GM12878 (cell line): ENCODE measurements at regions of chr16 and their contacts with region 1.

Region 1: GRCh38 chr16:21158208-21159110 is at the start of gene LDAF1:
- DNase-seq: no peak
- ATAC-seq: peak; percentile 97
- H3K4me3 ChIP-seq: peak within 1 kb of the TSS; percentile 84
- H3K27ac ChIP-seq: peak within 1 kb of the TSS; percentile 42
- H3K4me1 ChIP-seq: peaks cover 9% of the 10 kb centered on the region
- H3K27me3 ChIP-seq: no peaks in the 10 kb centered on the region
- CTCF ChIP-seq: no peak
- EP300 ChIP-seq: no peak
- POLR2A ChIP-seq: peak; percentile 49; the same call in 1 of the 2 replicates
- RAD21 ChIP-seq: no peak
- polyA plus RNA-seq, gene LDAF1: 6.8 to 8.3 TPM

Region 2: GRCh38 chr16:21179126-21179982 is 20.9 kb after region 1 on chr16:
- CTCF ChIA-PET with region 1: interaction called, 5 read pairs
- POLR2A ChIA-PET with region 1: no interaction called
- RAD21 ChIA-PET with region 1: no interaction called
- SMC1A ChIA-PET with region 1: interaction called, 24 read pairs
- in situ Hi-C with region 1: no loop called
- intact Hi-C with region 1: no loop called
- DNase-seq: no peak
- ATAC-seq: no peak
- H3K4me3 ChIP-seq: no peak overlapping the region
- H3K27ac ChIP-seq: no peak overlapping the region
- H3K4me1 ChIP-seq: no peaks in the 10 kb centered on the region
- H3K27me3 ChIP-seq: no peaks in the 10 kb centered on the region
- CTCF ChIP-seq: no peak
- EP300 ChIP-seq: no peak
- POLR2A ChIP-seq: no peak
- RAD21 ChIP-seq: no peak

Region 3: DNA sequence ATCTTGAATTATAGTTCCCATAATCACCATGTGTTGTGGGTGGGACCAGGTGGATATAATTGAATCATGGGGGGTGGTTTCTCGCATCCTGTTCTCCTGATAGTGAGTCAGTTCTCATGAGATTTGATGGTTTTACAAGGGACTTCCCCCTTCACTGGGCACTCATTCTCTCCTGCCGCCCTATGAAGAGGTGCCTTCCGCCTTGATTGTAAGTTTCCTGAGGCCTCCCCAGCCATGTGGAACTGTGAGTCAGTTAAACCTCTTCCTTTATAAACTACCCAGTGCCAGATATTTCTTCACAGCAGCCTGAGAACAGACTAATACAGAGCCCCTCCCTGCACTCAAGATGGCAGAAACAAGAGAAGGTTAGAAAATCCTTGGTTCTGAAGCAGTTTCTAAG is 26.4 kb after region 1 on chr16:
- CTCF ChIA-PET with region 1: interaction called, 28 read pairs
- POLR2A ChIA-PET with region 1: interaction called, 3 read pairs
- RAD21 ChIA-PET with region 1: interaction called, 6 read pairs
- SMC1A ChIA-PET with region 1: interaction called, 30 read pairs
- in situ Hi-C with region 1: no loop called
- intact Hi-C with region 1: no loop called
- DNase-seq: no peak
- ATAC-seq: no peak
- H3K4me3 ChIP-seq: no peak overlapping the region
- H3K27ac ChIP-seq: no peak overlapping the region
- H3K4me1 ChIP-seq: peaks cover 6% of the 10 kb centered on the region
- H3K27me3 ChIP-seq: no peaks in the 10 kb centered on the region
- CTCF ChIP-seq: no peak
- EP300 ChIP-seq: no peak
- POLR2A ChIP-seq: no peak
- RAD21 ChIP-seq: no peak

Region 4: DNA sequence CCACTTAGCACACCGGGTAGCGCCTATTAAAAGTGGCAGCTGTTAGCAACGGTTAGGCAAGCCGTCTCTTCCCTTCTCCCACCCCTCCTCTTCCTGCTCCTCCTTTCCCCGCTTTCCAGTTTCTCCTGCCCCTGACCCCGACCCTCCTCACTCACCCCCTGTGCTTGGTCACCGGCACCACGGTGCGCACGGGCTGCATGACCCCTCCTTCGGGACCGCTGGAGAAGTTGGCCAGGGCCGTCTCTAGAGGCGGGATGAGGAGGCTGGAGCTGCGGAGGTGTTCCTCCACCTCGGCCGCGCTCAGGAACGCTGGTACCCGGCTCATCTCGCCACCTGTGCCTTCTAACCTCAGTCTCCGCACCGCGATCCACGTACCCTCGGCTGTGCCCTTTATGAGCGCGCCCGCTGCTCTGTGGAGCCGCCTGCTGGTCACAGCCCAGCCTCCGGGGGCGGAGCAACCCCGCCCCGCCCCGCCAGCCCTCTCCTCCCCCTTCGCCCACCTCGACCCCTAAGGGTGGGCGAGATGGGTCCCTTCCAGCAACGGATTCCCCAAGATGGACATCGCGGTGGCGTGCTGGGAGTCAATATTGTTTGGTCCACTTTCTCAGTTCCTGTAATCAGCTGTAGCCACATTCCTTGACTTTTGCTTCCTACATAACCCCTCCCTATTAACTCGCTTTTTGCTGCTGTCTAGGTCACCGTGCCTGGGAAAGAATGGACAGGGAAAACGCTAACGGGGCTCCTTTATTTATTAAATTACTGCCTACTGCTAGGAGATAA is 119.7 kb after region 1 on chr16 and contains the start of gene CRYM:
- CTCF ChIA-PET with region 1: interaction called, 15 read pairs
- POLR2A ChIA-PET with region 1: no interaction called
- RAD21 ChIA-PET with region 1: interaction called, 5 read pairs
- SMC1A ChIA-PET with region 1: interaction called, 3 read pairs
- in situ Hi-C with region 1: no loop called
- intact Hi-C with region 1: no loop called
- DNase-seq: no peak
- ATAC-seq: peak; percentile 88
- H3K4me3 ChIP-seq: peak within 1 kb of the TSS; percentile 50; the same call in 1 of the 2 replicates
- H3K27ac ChIP-seq: no peak within 1 kb of the TSS
- H3K4me1 ChIP-seq: peaks cover 25% of the 10 kb centered on the region
- H3K27me3 ChIP-seq: no peaks in the 10 kb centered on the region; a peak in 1 of 4 replicates
- CTCF ChIP-seq: peak; percentile 69 to 96 (median 70)
- EP300 ChIP-seq: no peak
- POLR2A ChIP-seq: no peak
- RAD21 ChIP-seq: peak; percentile 23; the same call in 1 of the 2 replicates
- polyA plus RNA-seq, gene CRYM: 2.3 to 3.0 TPM

Region 5: DNA sequence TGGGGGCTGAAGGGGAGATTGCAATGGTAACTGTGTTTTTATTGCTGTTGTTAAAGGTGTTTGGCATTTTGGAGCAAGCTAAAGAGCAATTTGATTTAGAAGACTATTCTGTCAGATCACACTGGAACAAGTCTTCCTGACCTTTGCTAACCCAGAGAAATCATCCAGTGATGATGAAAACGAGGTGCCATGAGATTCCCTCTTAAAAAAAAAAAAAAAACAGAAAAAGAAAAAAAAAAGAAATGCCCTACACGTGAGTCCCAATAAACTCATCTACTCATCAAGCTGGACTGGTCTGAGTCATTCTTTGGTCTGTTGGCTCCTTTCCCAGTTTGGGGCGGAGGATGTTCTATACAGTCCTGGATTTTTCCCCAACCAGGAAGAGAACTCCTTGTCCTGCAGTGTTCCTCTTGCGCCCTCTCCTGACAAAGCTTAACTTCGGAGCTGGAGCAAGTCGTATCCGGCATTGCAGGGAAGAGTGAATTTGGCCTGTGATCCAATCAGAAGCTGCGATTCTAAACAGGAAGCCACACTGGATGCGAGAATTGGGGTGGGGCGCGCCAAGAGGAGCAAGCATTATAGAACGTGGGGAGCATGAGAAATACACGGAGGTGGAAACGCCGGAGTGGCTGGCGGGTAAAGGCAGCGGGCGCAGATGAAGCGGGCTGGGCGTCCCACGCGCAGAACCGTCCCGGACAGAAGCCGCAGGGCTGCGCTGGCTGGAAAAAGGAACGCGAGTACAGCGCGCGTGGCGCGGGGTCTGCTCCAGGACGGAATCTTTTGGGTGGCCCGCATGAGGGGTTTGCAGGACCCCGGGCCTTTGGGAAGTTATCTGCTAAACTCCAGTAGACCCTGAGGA is 142.1 kb after region 1 on chr16:
- CTCF ChIA-PET with region 1: interaction called, 90 read pairs
- POLR2A ChIA-PET with region 1: interaction called, 7 read pairs
- RAD21 ChIA-PET with region 1: interaction called, 45 read pairs
- SMC1A ChIA-PET with region 1: interaction called, 56 read pairs
- in situ Hi-C with region 1: no loop called
- intact Hi-C with region 1: loop called (anchors 1 kb)
- DNase-seq: peak; percentile 93
- ATAC-seq: peak; percentile 75
- H3K4me3 ChIP-seq: peak overlapping the region; percentile 90
- H3K27ac ChIP-seq: peak overlapping the region; percentile 54
- H3K4me1 ChIP-seq: no peaks in the 10 kb centered on the region
- H3K27me3 ChIP-seq: no peaks in the 10 kb centered on the region
- CTCF ChIP-seq: peak; percentile 71 to 97 (median 77)
- EP300 ChIP-seq: no peak
- POLR2A ChIP-seq: no peak
- RAD21 ChIP-seq: peak; percentile 86

Region 6: DNA sequence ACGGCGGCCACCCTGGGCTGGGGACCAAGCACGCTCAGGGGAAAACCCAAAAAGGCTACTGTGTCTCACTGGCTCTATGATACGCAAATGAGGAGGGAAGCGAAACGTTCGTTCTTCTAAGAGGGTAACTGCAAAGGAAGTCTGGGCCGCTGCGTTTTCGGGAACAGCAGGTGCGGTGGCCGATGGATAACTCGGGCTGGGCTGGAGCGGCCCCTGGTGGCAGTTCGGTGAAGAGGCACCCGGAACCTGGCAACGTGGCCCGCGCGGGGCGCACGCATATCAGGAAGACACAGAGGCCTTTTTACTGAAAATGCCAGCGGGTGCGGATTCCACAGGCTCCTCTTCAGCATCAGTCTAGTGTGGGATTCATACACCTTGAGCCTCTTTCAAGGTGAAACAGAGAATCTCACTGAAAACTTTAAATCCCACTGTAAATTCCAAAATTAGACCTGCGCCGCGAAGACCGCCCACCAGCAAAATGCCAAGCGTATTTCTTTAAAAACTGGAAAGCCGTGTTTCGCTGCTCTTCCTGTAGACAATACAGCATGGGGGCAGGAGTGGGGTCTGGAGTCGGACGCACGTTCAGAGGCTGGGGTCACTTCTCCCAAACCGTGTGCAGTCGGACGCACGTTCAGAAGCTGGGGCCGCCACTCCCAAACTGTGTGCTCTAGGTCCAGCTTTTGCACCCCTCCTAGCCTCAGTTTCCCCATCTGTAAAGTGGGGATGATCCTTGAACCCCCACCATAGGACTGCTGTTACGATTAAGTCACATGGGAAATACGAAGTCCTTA is 396.5 kb after region 1 on chr16:
- CTCF ChIA-PET with region 1: interaction called, 3 read pairs
- POLR2A ChIA-PET with region 1: interaction called, 3 read pairs
- RAD21 ChIA-PET with region 1: interaction called, 5 read pairs
- SMC1A ChIA-PET with region 1: interaction called, 6 read pairs
- in situ Hi-C with region 1: no loop called
- intact Hi-C with region 1: loop called (anchors 2 kb)
- DNase-seq: peak; percentile 96
- ATAC-seq: peak; percentile 99
- H3K4me3 ChIP-seq: peak overlapping the region; percentile 25; the same call in 1 of the 2 replicates
- H3K27ac ChIP-seq: peak overlapping the region; percentile 43; the same call in 1 of the 2 replicates
- H3K4me1 ChIP-seq: peaks cover 8% of the 10 kb centered on the region
- H3K27me3 ChIP-seq: no peaks in the 10 kb centered on the region
- CTCF ChIP-seq: peak; percentile 98 to 100 (median 99)
- EP300 ChIP-seq: peak in 1 of 2 experiments; percentile 84; a peak in 2 of 4 replicates
- POLR2A ChIP-seq: no peak
- RAD21 ChIP-seq: peak; percentile 99

Region 7: GRCh38 chr16:22321339-22322001 is 1163.0 kb after region 1 on chr16:
- CTCF ChIA-PET with region 1: interaction called, 8 read pairs
- POLR2A ChIA-PET with region 1: no interaction called
- RAD21 ChIA-PET with region 1: interaction called, 5 read pairs
- SMC1A ChIA-PET with region 1: no interaction called
- in situ Hi-C with region 1: loop called (anchors 10 kb)
- intact Hi-C with region 1: loop called (anchors 5 kb)
- DNase-seq: peak; percentile 36
- ATAC-seq: peak; percentile 91
- H3K4me3 ChIP-seq: no peak overlapping the region
- H3K27ac ChIP-seq: no peak overlapping the region
- H3K4me1 ChIP-seq: no peaks in the 10 kb centered on the region
- H3K27me3 ChIP-seq: no peaks in the 10 kb centered on the region
- CTCF ChIP-seq: peak; percentile 83 to 95 (median 94)
- EP300 ChIP-seq: no peak
- POLR2A ChIP-seq: no peak
- RAD21 ChIP-seq: peak; percentile 97